Astrocyte of the cerebellum (primary cell): ENCODE measurements at regions of chr11 and their contacts with region 1.

Region 1: GRCh38 chr11:3037040-3037944 is 19.9 kb downstream of the CARS1 start:
- DNase-seq: peak; percentile 48
- H3K4me3 ChIP-seq: no peak overlapping the region
- CTCF ChIP-seq: peak; percentile 80

Region 2: GRCh38 chr11:2951231-2952110 is 85.8 kb before region 1 on chr11:
- in situ Hi-C with region 1: loop called (anchors 5 kb)
- DNase-seq: no peak
- H3K4me3 ChIP-seq: no peak overlapping the region
- CTCF ChIP-seq: no peak

Region 3: DNA sequence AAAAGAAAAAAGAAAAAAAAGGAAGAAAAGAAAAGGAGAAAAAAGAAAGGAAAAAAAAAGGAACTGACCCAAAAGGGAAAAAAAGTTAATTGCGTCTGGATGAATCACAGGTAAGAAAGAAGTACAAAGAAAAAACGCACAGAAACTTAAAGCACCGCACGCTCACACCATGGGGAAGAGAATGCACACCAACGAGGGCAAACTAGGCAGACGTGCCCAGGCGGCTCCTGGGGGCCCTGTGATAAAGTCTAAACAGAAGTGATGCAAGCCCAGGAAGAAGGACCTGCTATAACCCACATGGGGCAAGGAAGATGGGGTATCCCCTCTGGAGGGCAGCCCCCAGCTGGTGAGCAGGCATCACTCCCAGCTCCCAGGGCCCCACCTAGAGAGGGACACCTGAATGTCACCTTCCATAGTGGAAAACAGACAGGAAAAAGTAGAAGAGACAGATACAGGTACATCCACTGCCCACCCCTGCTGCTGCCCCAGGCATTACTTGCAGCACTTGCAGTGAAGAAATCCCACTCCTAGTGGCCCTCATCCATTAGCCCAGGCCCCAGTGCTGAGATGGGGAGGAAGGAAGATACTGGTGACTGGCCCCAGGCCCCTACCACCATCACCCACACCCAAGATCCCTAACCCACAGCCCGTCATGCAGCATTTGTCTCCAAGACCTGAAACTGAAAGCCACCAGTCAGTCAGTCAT is 74.0 kb before region 1 on chr11:
- in situ Hi-C with region 1: no loop called
- DNase-seq: no peak
- H3K4me3 ChIP-seq: no peak overlapping the region
- CTCF ChIP-seq: no peak

Region 4: DNA sequence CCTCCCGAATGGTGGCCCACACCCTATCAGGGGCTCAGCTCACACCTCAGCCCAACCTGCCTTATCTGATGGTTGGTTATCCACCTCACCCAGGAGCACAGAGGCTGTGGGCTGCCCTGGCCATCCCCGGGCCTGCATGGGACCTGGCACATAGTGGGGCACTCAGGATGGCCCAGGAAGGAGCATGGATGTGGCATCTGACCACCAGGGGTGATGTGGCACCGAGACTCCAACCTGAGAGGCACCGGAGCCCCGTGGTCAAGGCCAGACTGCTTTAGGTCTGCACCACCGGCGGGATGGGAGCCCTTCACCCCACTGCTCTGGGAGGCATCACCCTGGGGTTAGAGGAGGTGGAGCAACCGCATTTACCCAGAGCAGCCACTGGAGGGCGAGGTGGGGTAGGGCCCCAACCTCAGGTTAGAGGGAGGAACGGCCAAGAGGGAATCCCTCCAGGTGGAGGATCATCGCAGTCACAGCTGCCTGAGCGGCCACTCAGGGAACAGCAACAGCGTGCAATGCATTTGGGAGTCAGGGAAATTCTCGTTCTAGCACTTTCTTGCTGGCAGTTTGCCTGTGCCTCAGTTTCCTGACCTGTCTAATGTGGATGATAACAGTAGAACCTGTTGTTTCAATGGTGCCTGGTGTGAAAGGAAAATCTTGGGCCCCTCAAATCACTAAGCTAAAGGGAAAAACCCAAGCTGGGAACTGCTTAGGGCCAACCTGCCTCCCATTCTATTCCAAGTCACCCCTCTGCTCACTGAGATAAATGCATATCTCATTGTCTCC is 72.8 kb after region 1 on chr11:
- in situ Hi-C with region 1: loop called (anchors 5 kb)
- DNase-seq: no peak
- H3K4me3 ChIP-seq: no peak overlapping the region
- CTCF ChIP-seq: peak; percentile 55